PC-3 (cell line): ENCODE measurements at regions of chr5 and their contacts with region 1.

Region 1: DNA sequence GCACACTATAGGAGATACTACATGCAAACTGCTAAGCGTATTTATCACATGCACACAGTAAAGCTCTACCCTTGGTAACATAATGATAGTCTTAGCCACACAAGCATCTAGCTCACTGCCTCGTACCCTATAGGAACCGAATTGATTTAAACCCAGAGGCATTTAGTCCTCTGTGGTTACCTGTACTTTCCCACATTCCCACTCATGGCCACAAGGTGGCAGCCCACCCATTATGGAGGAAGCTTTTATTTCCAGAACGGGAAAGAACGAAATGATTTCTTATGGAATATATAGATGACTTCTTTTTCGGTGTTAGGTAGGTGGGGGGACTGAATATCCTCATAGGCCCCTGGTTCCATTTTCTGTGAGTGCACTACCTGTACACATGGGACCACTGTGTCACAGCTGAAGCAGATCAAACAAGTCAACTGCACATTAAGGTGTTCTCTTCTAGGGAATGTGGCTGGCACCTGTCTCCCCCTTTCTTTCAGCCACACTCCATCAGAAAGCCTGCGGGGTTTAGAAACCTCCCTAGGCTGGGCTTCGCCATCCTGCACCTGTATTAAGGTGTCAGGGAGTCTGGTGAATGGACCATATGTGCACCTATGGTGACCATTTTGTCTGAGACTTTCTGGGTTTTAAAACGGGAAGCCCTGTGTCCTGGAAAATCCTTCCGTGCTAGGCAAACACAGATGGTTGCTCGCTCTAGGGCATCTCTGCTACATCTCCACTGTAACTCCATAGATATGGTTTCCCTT is 313.2 kb downstream of the SLIT3 start:
- DNase-seq: peak; percentile 90
- ATAC-seq: peak; percentile 80
- H3K4me3 ChIP-seq: peak overlapping the region; percentile 10; the same call in 1 of the 2 replicates
- H3K27ac ChIP-seq: no peak overlapping the region
- H3K4me1 ChIP-seq: peaks cover 14% of the 10 kb centered on the region
- H3K27me3 ChIP-seq: 0 out of 2 replicates have a peak, but pooled peaks cover 20% of the 10 kb centered on the region
- CTCF ChIP-seq: peak; percentile 97

Region 2: GRCh38 chr5:168706655-168707069 is 281.1 kb before region 1 on chr5:
- CTCF ChIA-PET with region 1: no interaction called
- POLR2A ChIA-PET with region 1: no interaction called
- intact Hi-C with region 1: loop called (anchors 2 kb)
- DNase-seq: peak; percentile 52
- ATAC-seq: peak; percentile 84
- H3K4me3 ChIP-seq: no peak overlapping the region
- H3K27ac ChIP-seq: no peak overlapping the region
- H3K4me1 ChIP-seq: no peaks in the 10 kb centered on the region
- H3K27me3 ChIP-seq: no peaks in the 10 kb centered on the region
- CTCF ChIP-seq: peak; percentile 63

Region 3: DNA sequence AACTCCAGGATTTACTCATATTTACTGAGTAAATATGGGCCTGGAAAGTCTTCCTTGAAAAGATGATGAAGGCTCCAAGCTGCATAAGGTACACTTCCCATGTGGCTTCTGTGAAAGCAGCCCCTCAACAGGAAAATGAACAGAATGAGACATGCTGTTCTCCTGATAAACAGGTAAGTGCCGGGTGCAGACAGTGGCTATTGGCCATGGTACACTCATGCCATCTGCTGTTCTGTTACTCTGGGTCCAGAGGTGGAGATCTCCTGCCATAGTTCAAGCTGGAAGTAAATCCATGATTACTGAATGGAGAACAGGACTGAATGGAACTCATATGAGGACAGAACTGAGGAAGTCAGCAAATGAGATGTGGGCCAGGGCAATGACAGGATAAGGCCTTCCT is 209.6 kb after region 1 on chr5:
- CTCF ChIA-PET with region 1: interaction called, 3 read pairs
- POLR2A ChIA-PET with region 1: no interaction called
- intact Hi-C with region 1: loop called (anchors 10 kb)
- DNase-seq: peak; percentile 51
- ATAC-seq: no peak
- H3K4me3 ChIP-seq: no peak overlapping the region
- H3K27ac ChIP-seq: no peak overlapping the region
- H3K4me1 ChIP-seq: peaks cover 5% of the 10 kb centered on the region; the same call in 1 of the 2 replicates
- H3K27me3 ChIP-seq: no peaks in the 10 kb centered on the region
- CTCF ChIP-seq: peak; percentile 60

Region 4: GRCh38 chr5:169548315-169548714 is 560.6 kb after region 1 on chr5:
- CTCF ChIA-PET with region 1: no interaction called
- POLR2A ChIA-PET with region 1: no interaction called
- intact Hi-C with region 1: loop called (anchors 1 kb)
- DNase-seq: peak; percentile 66
- ATAC-seq: peak; percentile 92
- H3K4me3 ChIP-seq: no peak overlapping the region
- H3K27ac ChIP-seq: no peak overlapping the region
- H3K4me1 ChIP-seq: no peaks in the 10 kb centered on the region
- H3K27me3 ChIP-seq: peaks cover 22% of the 10 kb centered on the region
- CTCF ChIP-seq: peak; percentile 67

Region 5: GRCh38 chr5:170216266-170216864 is 1228.6 kb after region 1 on chr5:
- CTCF ChIA-PET with region 1: no interaction called
- POLR2A ChIA-PET with region 1: no interaction called
- intact Hi-C with region 1: loop called (anchors 5 kb)
- DNase-seq: peak; percentile 70
- ATAC-seq: peak; percentile 28
- H3K4me3 ChIP-seq: no peak overlapping the region
- H3K27ac ChIP-seq: no peak overlapping the region
- H3K4me1 ChIP-seq: peaks cover 39% of the 10 kb centered on the region
- H3K27me3 ChIP-seq: no peaks in the 10 kb centered on the region
- CTCF ChIP-seq: peak; percentile 80